GM12878 (cell line): ENCODE measurements at regions of chr10 and their contacts with region 1.

Region 1: DNA sequence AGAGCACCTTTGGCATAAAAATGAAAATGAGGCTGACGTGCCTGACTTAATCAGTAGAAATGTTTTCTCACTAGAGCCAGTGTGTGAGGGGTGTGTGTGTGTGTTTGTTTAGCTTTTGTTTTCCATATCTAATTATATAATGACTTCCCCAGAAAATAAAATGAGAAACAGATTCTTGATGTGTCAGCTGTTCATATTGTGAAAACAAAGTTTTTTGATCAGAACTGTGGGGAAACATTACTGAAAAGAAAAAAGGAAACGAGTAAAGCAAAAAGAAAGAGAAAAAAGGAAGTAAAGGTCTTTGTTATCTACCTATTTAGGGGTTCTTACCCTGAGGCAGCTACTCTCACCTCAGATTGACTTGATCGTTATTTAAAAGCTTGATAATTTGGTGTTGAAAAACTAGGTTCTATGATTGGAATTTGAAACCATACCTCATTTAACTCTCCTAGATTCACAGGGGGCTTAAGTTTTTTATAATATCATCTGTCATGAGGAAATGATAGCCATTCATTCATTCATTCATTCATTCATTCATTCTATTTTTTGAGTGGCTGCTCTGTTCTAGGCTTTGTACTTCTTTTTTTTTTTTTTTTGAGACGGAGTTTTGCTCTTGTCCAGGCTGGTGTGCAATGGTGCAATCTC is 58.0 kb downstream of the CREM start:
- DNase-seq: no peak
- ATAC-seq: peak; percentile 74
- H3K4me3 ChIP-seq: no peak overlapping the region; the same call in 1 of the 2 replicates
- H3K27ac ChIP-seq: peak overlapping the region; percentile 74
- H3K4me1 ChIP-seq: peaks cover 22% of the 10 kb centered on the region
- H3K27me3 ChIP-seq: no peaks in the 10 kb centered on the region
- CTCF ChIP-seq: no peak
- EP300 ChIP-seq: peak in 1 of 2 experiments; percentile 51; a peak in 1 of 4 replicates
- POLR2A ChIP-seq: no peak
- RAD21 ChIP-seq: no peak

Region 2: DNA sequence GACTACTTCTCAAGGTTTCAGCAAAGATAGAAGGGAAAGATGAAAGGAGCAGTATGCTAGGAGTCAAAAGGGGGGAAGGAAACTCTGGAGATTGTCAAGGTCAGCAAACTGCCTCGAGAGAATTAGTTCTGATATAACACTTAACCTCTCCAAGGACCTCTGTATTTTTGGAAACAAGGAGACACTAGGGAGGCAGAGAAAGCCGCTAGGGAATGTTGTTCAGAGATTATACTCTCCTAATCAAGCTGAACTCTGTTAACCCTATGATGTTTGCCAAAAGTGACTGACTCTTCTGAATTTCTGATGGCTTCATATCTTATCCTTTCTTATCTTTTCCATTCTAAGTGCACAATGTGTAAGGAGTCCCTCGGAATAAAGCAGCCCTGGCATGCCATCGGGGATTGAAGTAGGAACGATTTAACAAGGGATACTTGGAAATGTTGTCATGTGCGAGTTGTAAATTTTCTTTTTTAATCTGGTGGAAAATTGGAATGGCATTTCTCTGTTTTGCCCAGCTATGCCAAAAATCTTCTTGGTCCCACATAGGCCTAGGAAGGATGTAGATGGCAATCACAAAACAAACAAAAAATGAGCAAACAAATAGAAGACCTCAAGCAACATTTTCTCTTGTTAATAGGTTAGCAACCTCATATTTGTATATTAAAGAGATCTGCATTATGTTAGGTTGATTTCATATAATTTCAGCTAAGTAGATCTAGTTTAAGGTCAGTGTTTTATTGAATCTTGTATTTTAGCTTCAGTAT is 30.8 kb before region 1 on chr10:
- CTCF ChIA-PET with region 1: interaction called, 6 read pairs
- POLR2A ChIA-PET with region 1: interaction called, 8 read pairs
- RAD21 ChIA-PET with region 1: interaction called, 15 read pairs
- SMC1A ChIA-PET with region 1: interaction called, 26 read pairs
- in situ Hi-C with region 1: no loop called
- intact Hi-C with region 1: loop called (anchors 2 kb)
- DNase-seq: no peak
- ATAC-seq: no peak
- H3K4me3 ChIP-seq: no peak overlapping the region
- H3K27ac ChIP-seq: no peak overlapping the region
- H3K4me1 ChIP-seq: peaks cover 22% of the 10 kb centered on the region
- H3K27me3 ChIP-seq: no peaks in the 10 kb centered on the region
- CTCF ChIP-seq: no peak
- EP300 ChIP-seq: no peak
- POLR2A ChIP-seq: no peak
- RAD21 ChIP-seq: no peak

Region 3: DNA sequence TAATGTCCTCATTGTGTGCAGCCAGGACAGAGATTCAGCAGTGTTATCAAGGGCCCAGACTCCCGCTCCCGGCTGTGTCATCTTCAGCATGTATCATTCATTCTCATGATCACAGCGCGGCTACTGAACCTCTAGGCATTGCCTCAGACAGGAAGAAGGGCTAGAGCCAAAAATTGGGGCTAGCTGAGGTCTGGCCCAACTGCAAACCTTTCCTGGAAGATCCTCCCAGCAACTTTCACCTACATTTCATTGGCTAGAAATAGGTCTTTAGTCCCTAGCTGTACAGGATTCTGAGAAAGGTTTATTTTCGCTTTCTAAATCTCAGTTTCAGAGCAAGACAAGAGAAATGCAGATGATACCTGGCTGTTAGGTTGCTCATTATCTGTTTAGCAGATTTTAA is 23.9 kb after region 1 on chr10:
- CTCF ChIA-PET with region 1: no interaction called
- POLR2A ChIA-PET with region 1: no interaction called
- RAD21 ChIA-PET with region 1: no interaction called
- SMC1A ChIA-PET with region 1: interaction called, 10 read pairs
- in situ Hi-C with region 1: no loop called
- intact Hi-C with region 1: no loop called
- DNase-seq: no peak
- ATAC-seq: peak; percentile 89
- H3K4me3 ChIP-seq: no peak overlapping the region
- H3K27ac ChIP-seq: peak overlapping the region; percentile 49
- H3K4me1 ChIP-seq: peaks cover 14% of the 10 kb centered on the region
- H3K27me3 ChIP-seq: no peaks in the 10 kb centered on the region
- CTCF ChIP-seq: no peak
- EP300 ChIP-seq: no peak
- POLR2A ChIP-seq: no peak
- RAD21 ChIP-seq: no peak

Region 4: GRCh38 chr10:35228058-35228457 is 43.4 kb after region 1 on chr10:
- CTCF ChIA-PET with region 1: no interaction called
- POLR2A ChIA-PET with region 1: no interaction called
- RAD21 ChIA-PET with region 1: no interaction called
- SMC1A ChIA-PET with region 1: no interaction called
- in situ Hi-C with region 1: no loop called
- intact Hi-C with region 1: no loop called
- DNase-seq: no peak
- ATAC-seq: no peak
- H3K4me3 ChIP-seq: no peak overlapping the region
- H3K27ac ChIP-seq: no peak overlapping the region
- H3K4me1 ChIP-seq: no peaks in the 10 kb centered on the region
- H3K27me3 ChIP-seq: no peaks in the 10 kb centered on the region
- CTCF ChIP-seq: no peak
- EP300 ChIP-seq: no peak
- POLR2A ChIP-seq: no peak
- RAD21 ChIP-seq: no peak

Region 5: GRCh38 chr10:35946556-35946955 is 761.9 kb after region 1 on chr10:
- CTCF ChIA-PET with region 1: no interaction called
- POLR2A ChIA-PET with region 1: no interaction called
- RAD21 ChIA-PET with region 1: no interaction called
- SMC1A ChIA-PET with region 1: no interaction called
- in situ Hi-C with region 1: no loop called
- intact Hi-C with region 1: no loop called
- DNase-seq: no peak
- ATAC-seq: no peak
- H3K4me3 ChIP-seq: no peak overlapping the region
- H3K27ac ChIP-seq: no peak overlapping the region
- H3K4me1 ChIP-seq: no peaks in the 10 kb centered on the region
- H3K27me3 ChIP-seq: no peaks in the 10 kb centered on the region
- CTCF ChIP-seq: no peak
- EP300 ChIP-seq: no peak
- POLR2A ChIP-seq: no peak
- RAD21 ChIP-seq: no peak